Heart right ventricle (tissue), 16 donors: ENCODE measurements at regions of chr1 and their contacts with region 1.

Region 1: GRCh38 chr1:198359024-198359653 is 181.3 kb downstream of the ATP6V1G3 start:
- DNase-seq: no peak
- ATAC-seq: no peak
- H3K4me3 ChIP-seq: no peak overlapping the region
- H3K27ac ChIP-seq: no peak overlapping the region
- H3K4me1 ChIP-seq: no peaks in the 10 kb centered on the region
- H3K27me3 ChIP-seq: no peaks in the 10 kb centered on the region
- CTCF ChIP-seq: peak; percentile 20 to 62 (median 48)

Region 2: GRCh38 chr1:198082576-198082975 is 276.6 kb before region 1 on chr1:
- intact Hi-C with region 1: loop called in 7 of 10 experiments (anchors 2 to 10 kb)
- DNase-seq: no peak
- ATAC-seq: no peak
- H3K4me3 ChIP-seq: no peak overlapping the region
- H3K27ac ChIP-seq: no peak overlapping the region
- H3K4me1 ChIP-seq: no peaks in the 10 kb centered on the region
- H3K27me3 ChIP-seq: no peaks in the 10 kb centered on the region
- CTCF ChIP-seq: no peak

Region 3: DNA sequence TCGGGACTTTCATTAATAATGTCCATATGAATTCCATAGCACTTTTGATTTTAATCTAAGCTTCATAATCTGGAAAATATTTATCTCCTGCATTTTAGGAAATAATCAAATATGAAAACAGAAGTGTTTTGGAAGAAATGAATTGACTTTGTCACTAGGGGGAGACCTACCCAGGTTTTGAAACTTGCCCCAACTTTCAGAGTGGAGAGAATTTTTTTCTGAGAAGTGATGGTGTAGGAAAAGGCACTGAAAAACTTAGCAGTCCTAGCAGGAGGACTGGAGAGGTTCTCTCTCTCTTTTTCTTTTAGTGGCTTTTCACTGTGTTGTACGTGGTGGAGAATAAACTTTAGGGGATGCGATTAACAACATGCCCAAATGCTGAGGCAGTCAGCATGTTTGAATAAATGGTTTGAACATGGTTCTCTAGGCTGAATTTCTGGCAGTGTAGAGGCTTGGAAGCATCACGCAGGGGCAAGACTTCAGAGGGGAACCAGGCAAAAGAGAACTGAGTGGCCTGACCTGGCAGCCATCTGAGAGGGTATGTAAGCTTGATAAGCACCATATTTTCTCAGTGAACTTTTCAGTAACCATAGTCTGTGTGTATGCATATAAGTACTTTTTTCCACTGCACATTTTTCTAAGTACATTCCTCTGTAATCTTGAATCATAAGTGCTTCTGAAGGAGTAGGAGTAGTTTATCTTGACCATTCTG is 270.6 kb before region 1 on chr1:
- intact Hi-C with region 1: loop called in 9 of 10 experiments (anchors 2 to 10 kb)
- DNase-seq: no peak
- ATAC-seq: peak in 1 of 8 donors; percentile 55
- H3K4me3 ChIP-seq: no peak overlapping the region
- H3K27ac ChIP-seq: no peak overlapping the region
- H3K4me1 ChIP-seq: peaks cover 0 to 11% (median 0%) of the 10 kb centered on the region in 9 donors
- H3K27me3 ChIP-seq: no peaks in the 10 kb centered on the region
- CTCF ChIP-seq: peak; percentile 13 to 76 (median 67)

Region 4: GRCh38 chr1:198096390-198096789 is 262.7 kb before region 1 on chr1:
- intact Hi-C with region 1: loop called in 1 of 10 experiments (anchors 10 kb)
- DNase-seq: no peak
- ATAC-seq: no peak
- H3K4me3 ChIP-seq: no peak overlapping the region
- H3K27ac ChIP-seq: no peak overlapping the region
- H3K4me1 ChIP-seq: no peaks in the 10 kb centered on the region
- H3K27me3 ChIP-seq: no peaks in the 10 kb centered on the region
- CTCF ChIP-seq: no peak